ENCODE measurements at regions of chr6 and their contacts with region 1.

Region 1: GRCh38 chr6:28124102-28124970 is at the start of gene ZSCAN16:
- DNase-seq: peak; percentile 84
- H3K4me3 ChIP-seq: peak within 1 kb of the TSS; percentile 58 to 91 (median 77)
- H3K27ac ChIP-seq: peak within 1 kb of the TSS; percentile 46
- H3K4me1 ChIP-seq: peaks cover 11% of the 10 kb centered on the region
- H3K27me3 ChIP-seq: no peaks in the 10 kb centered on the region
- CTCF ChIP-seq: no peak
- POLR2A ChIP-seq: peak; percentile 92
- total RNA-seq, gene ZSCAN16: 7.7 and 8.9 TPM in 2 replicates

Region 2: GRCh38 chr6:28266962-28267694 is 142.8 kb after region 1 on chr6 and contains the start of gene ZSCAN26:
- CTCF ChIA-PET with region 1: no interaction called
- POLR2A ChIA-PET with region 1: no interaction called
- dilution Hi-C with region 1: no loop called
- intact Hi-C with region 1: loop called (anchors 1 kb)
- DNase-seq: peak; percentile 92
- H3K4me3 ChIP-seq: peak within 1 kb of the TSS; percentile 73 to 96 (median 85)
- H3K27ac ChIP-seq: peak within 1 kb of the TSS; percentile 71
- H3K4me1 ChIP-seq: peaks cover 35% of the 10 kb centered on the region
- H3K27me3 ChIP-seq: peaks cover 0 to 3% of the 10 kb centered on the region in 2 experiments
- CTCF ChIP-seq: no peak
- POLR2A ChIP-seq: peak; percentile 81
- total RNA-seq, gene ZSCAN26: 12.7 and 14.1 TPM in 2 replicates

Region 3: GRCh38 chr6:28383235-28384142 is 259.2 kb after region 1 on chr6:
- CTCF ChIA-PET with region 1: interaction called, 12 read pairs
- POLR2A ChIA-PET with region 1: no interaction called
- dilution Hi-C with region 1: no loop called
- intact Hi-C with region 1: loop called (anchors 1 kb)
- DNase-seq: peak; percentile 93
- H3K4me3 ChIP-seq: peak overlapping the region; percentile 37 to 45 (median 42)
- H3K27ac ChIP-seq: peak overlapping the region; percentile 14
- H3K4me1 ChIP-seq: peaks cover 9% of the 10 kb centered on the region
- H3K27me3 ChIP-seq: no peaks in the 10 kb centered on the region
- CTCF ChIP-seq: peak; percentile 54 to 62
- POLR2A ChIP-seq: no peak